Naive thymus-derived CD4-positive, alpha-beta T cell (primary cell): ENCODE measurements at regions of chr1 and their contacts with region 1.

Region 1: GRCh38 chr1:51729156-51729823 is 112.4 kb downstream of the OSBPL9 start:
- DNase-seq: peak; percentile 73 to 95 (median 88)
- ATAC-seq: peak; percentile 96
- H3K4me3 ChIP-seq: peak overlapping the region; percentile 87
- H3K4me3 Mint-ChIP-seq: peak overlapping the region; percentile 88 to 94 (median 92)
- H3K27ac ChIP-seq: peak overlapping the region; percentile 78
- H3K27ac Mint-ChIP-seq: peak overlapping the region; percentile 77 to 93 (median 89)
- H3K4me1 ChIP-seq: peaks cover 11 to 19% of the 10 kb centered on the region in 2 donors
- H3K4me1 Mint-ChIP-seq: peaks cover 17 to 56% (median 48%) of the 10 kb centered on the region in 7 donors
- H3K27me3 ChIP-seq: no peaks in the 10 kb centered on the region
- H3K27me3 Mint-ChIP-seq: no peaks in the 10 kb centered on the region

Region 2: DNA sequence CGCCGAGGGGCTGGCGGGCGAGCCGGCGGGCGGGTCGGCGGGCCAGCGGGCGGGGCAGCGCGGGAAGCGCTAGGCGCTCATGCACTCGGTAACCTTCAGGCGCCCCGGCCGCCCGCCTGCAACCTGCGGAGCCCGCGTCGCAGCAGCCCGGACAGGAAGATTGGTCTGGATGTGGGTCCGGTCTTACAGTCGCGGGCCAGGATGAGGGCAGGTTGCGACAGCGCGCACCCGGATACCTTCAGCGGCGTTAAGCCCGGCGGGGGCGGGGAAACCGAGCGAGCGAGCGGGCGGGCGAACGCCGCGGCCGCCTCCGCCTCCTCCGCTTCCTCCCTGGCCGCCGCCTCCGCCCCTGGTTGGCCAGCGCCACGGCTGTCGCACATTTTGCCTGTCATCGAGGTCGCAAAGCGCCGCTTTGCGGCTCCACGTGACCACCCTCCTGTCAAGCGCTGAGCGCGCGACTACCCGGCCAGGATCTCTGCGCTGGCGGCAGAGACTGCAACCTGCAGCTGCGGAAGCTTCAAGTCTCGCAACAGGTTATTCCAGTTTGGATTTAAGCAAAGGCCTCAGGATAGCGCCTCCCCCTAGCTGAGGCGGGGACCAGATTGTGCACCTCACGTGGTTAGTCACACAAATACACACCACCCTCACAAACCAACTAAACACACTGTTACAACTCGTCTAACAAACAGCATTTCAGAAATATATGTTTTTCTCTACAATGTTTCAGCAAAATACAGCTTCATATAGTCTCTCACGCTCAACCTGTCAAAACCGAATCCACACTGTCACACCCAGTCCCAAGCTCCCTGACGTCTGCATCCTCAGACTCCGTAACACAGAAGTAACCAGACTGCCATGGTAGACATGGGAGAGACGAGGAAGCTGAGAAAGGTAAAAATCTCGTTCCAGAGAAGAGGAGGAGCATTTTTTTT is 769.1 kb before region 1 on chr1 and contains the start of gene FAF1:
- CTCF ChIA-PET with region 1: no interaction called
- POLR2A ChIA-PET with region 1: no interaction called
- intact Hi-C with region 1: loop called in 1 of 2 experiments (anchors 10 kb)
- DNase-seq: peak; percentile 94 to 98 (median 98)
- ATAC-seq: peak; percentile 98
- H3K4me3 ChIP-seq: peak within 1 kb of the TSS; percentile 61
- H3K4me3 Mint-ChIP-seq: peak within 1 kb of the TSS; percentile 82 to 98 (median 92)
- H3K27ac ChIP-seq: peak within 1 kb of the TSS; percentile 71
- H3K27ac Mint-ChIP-seq: peak within 1 kb of the TSS; percentile 64 to 97 (median 96)
- H3K4me1 ChIP-seq: peaks cover 7% of the 10 kb centered on the region in 2 donors
- H3K4me1 Mint-ChIP-seq: peaks cover 14 to 35% (median 24%) of the 10 kb centered on the region in 7 donors
- H3K27me3 ChIP-seq: no peaks in the 10 kb centered on the region
- H3K27me3 Mint-ChIP-seq: peaks cover 0 to 9% (median 0%) of the 10 kb centered on the region in 5 donors
- total RNA-seq, gene FAF1: 46.4 to 66.6 (median 52.5) TPM

Region 3: DNA sequence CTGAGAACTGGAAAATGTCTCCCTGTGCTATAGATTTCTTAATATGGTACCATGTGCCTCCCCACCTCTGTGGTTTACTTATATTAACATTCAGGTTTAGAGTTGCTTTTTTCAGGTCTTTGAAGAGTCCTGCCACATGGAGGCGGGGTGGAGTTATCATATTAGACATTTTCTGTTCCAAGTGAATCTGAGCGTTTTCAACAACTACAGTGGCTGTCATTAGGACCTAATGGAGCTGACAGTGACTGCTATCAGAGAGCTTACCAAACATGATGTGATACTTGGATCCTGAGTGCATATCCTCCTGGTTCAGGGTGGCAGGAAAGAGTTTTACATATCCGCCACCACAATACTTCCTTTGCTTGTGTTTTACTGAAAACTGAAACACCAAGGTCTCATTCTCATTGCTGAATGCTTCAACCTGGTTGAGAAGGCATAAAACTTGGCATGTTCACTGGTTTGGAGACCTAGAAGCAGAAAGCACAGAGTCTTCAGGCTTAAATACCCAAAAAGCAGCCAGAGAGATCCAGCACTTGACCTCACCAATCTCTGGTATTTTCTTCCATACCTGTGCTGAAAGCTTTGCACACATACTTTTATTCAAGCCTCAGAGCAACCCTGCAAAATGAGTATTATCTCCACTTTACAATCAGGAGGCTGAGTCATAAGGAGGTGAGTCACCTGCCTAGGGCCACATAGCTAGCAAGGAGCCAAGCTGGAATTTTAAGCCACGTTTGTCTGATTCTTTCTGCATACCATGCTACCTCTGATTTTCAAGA is 159.8 kb before region 1 on chr1:
- CTCF ChIA-PET with region 1: no interaction called
- POLR2A ChIA-PET with region 1: no interaction called
- intact Hi-C with region 1: loop called in 1 of 2 experiments (anchors 5 kb)
- DNase-seq: peak in 7 of 9 donors; percentile 11 to 37 (median 28)
- ATAC-seq: peak; percentile 71
- H3K4me3 ChIP-seq: peak overlapping the region; percentile 3
- H3K4me3 Mint-ChIP-seq: peak overlapping the region in 9 of 10 donors; percentile 31 to 71 (median 61)
- H3K27ac ChIP-seq: peak overlapping the region; percentile 48
- H3K27ac Mint-ChIP-seq: peak overlapping the region; percentile 67 to 92 (median 83)
- H3K4me1 ChIP-seq: peaks cover 22 to 24% of the 10 kb centered on the region in 2 donors
- H3K4me1 Mint-ChIP-seq: peaks cover 18 to 37% (median 28%) of the 10 kb centered on the region in 7 donors
- H3K27me3 ChIP-seq: no peaks in the 10 kb centered on the region
- H3K27me3 Mint-ChIP-seq: no peaks in the 10 kb centered on the region

Region 4: GRCh38 chr1:51616901-51617708 is 112.2 kb before region 1 on chr1 and contains the start of gene OSBPL9:
- CTCF ChIA-PET with region 1: no interaction called
- POLR2A ChIA-PET with region 1: interaction called, 3 read pairs
- intact Hi-C with region 1: loop called (anchors 1 kb)
- DNase-seq: peak; percentile 69 to 89 (median 84)
- ATAC-seq: peak; percentile 98
- H3K4me3 ChIP-seq: peak within 1 kb of the TSS; percentile 95
- H3K4me3 Mint-ChIP-seq: peak within 1 kb of the TSS; percentile 98 to 100 (median 99)
- H3K27ac ChIP-seq: peak within 1 kb of the TSS; percentile 86
- H3K27ac Mint-ChIP-seq: peak within 1 kb of the TSS; percentile 94 to 100 (median 99)
- H3K4me1 ChIP-seq: peaks cover 6 to 15% of the 10 kb centered on the region in 2 donors
- H3K4me1 Mint-ChIP-seq: peaks cover 22 to 60% (median 48%) of the 10 kb centered on the region in 7 donors
- H3K27me3 ChIP-seq: no peaks in the 10 kb centered on the region
- H3K27me3 Mint-ChIP-seq: peaks cover 0 to 6% (median 3%) of the 10 kb centered on the region in 5 donors
- total RNA-seq, gene OSBPL9: 44.5 to 56.9 (median 46.6) TPM